Activated CD8-positive, alpha-beta T cell treated with anti-CD3 and anti-CD28 coated beads for 36 hours (primary cell): ENCODE measurements at regions of chr12 and their contacts with region 1.

Region 1: GRCh38 chr12:96985480-96986362 is 78.7 kb downstream of the NEDD1 start:
- DNase-seq: peak; percentile 38
- ATAC-seq: peak; percentile 93
- H3K4me3 Mint-ChIP-seq: peak overlapping the region; percentile 51
- H3K27ac Mint-ChIP-seq: no peak overlapping the region
- H3K4me1 Mint-ChIP-seq: peaks cover 2% of the 10 kb centered on the region
- H3K27me3 Mint-ChIP-seq: peaks cover 17% of the 10 kb centered on the region
- CTCF ChIP-seq: peak; percentile 95

Region 2: DNA sequence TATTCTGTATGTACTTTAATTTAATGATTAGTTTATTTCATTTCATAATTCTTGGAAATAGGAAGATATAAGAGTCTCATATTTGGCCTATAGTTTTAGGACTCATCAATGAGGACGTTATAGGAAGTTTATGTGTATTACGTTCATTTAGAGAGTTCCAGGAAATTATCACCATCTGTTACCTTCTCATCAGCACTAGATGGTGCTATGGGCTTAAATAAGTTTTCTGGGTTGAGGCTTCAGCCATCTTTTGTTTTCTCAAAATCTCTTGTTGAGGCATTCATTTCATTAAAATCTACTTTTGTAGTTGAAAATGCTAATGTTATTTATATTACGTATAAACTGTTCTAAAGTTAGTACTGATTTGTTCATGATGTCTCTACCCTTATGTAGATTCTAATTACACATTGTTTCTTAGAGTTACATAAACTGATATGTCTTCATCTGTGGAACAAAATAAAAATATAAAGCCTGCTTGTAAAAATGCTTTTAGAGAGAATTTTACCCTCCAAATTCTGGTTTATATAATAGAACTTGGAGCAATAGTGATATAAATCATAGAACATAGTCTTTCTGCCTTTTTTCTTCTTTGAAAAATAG is 407.1 kb before region 1 on chr12:
- CTCF ChIA-PET with region 1: interaction called, 17 read pairs
- POLR2A ChIA-PET with region 1: no interaction called
- intact Hi-C with region 1: loop called (anchors 1 kb)
- DNase-seq: peak; percentile 10
- ATAC-seq: peak; percentile 77
- H3K4me3 Mint-ChIP-seq: no peak overlapping the region
- H3K27ac Mint-ChIP-seq: no peak overlapping the region
- H3K4me1 Mint-ChIP-seq: no peaks in the 10 kb centered on the region
- H3K27me3 Mint-ChIP-seq: peaks cover 7% of the 10 kb centered on the region
- CTCF ChIP-seq: peak; percentile 66

Region 3: DNA sequence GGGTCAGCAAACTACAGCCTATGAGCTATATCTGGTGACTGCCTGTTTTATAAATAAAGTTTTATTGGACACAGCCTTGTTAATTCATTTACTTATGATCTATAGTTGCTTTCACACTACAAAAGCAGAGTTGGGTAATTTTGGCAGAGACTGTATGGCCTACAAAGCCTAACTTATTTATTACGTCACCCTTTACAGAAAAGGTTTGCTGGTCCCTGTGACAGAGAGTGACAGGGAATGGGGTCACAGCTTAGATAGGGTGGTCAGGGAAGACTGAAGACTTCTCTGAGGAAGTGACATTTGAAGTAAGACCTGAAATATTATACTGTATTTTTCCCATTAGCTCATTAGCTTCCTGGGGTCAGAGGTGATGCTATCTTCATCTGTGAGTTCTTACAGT is 154.4 kb before region 1 on chr12:
- CTCF ChIA-PET with region 1: no interaction called
- POLR2A ChIA-PET with region 1: no interaction called
- intact Hi-C with region 1: loop called (anchors 10 kb)
- DNase-seq: no peak
- ATAC-seq: no peak
- H3K4me3 Mint-ChIP-seq: no peak overlapping the region
- H3K27ac Mint-ChIP-seq: no peak overlapping the region
- H3K4me1 Mint-ChIP-seq: no peaks in the 10 kb centered on the region
- H3K27me3 Mint-ChIP-seq: no peaks in the 10 kb centered on the region
- CTCF ChIP-seq: no peak

Region 4: DNA sequence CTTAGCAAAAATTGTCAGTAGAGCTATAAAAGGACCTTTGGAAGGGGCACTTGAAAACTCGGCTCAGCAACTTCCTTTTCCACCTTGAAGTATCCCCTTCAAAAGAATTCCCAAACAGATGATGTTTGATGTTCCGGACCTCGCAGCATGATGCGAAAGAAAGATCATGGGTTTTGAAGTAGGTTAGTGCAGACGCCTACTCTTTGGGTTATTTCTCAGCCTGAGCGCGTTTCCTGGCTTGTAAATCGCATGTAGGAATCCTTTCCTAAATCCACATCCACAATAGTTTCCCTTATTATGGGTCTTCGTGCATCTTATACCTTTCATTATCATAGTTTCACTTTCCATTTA is 79.2 kb before region 1 on chr12:
- CTCF ChIA-PET with region 1: no interaction called
- POLR2A ChIA-PET with region 1: no interaction called
- intact Hi-C with region 1: no loop called
- DNase-seq: no peak
- ATAC-seq: no peak
- H3K4me3 Mint-ChIP-seq: peak overlapping the region; percentile 97
- H3K27ac Mint-ChIP-seq: peak overlapping the region; percentile 94
- H3K4me1 Mint-ChIP-seq: peaks cover 36% of the 10 kb centered on the region
- H3K27me3 Mint-ChIP-seq: no peaks in the 10 kb centered on the region
- CTCF ChIP-seq: no peak